CD4-positive, alpha-beta T cell (primary cell): ENCODE measurements at regions of chrX and their contacts with region 1.

Region 1: DNA sequence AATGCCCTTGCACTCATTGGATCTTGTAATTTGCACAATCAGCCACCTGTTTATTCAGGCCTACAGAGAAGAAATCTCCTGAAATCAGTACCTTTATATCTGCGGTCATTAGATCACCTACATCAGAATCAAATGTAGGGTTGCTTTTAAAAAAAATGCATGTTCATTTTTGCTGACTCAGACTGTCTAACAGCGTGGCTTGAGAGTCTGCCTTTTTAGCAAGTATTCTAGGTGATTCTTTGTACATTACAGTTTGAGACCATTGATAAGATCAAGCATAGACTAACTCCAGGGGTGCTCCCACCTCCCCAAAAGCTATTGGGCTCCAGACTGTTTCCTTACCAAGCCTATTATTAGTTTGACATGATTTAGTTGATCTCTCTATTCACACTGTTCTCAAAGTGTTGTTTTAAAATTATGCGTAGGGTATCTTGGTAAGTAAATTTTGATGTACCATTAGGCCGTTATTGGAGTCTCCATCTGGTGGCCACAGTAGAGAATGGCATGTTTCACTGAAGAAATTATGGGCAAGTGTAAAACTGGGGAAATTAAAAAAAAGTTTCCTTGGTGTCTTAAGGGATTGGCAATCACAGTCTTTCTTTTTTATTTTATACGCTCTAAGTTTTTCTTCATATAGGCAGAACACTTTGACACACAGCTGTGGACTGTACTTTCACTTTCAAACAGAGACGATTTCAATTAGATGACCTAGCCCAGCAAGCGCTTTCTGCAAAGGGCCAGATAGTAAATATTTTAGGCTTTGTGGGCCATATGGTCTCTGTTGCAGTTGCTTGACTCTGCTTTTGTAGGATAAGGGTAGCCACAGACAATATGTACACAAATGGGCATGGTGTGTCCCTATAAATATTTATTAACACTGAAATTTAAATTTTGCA is 33.7 kb upstream of the MSL3 start:
- DNase-seq: peak in 5 of 14 experiments; percentile 2 to 51 (median 28)
- ATAC-seq: peak; percentile 61
- H3K4me3 ChIP-seq: no peak overlapping the region
- H3K4me3 Mint-ChIP-seq: no peak overlapping the region
- H3K27ac ChIP-seq: no peak overlapping the region
- H3K27ac Mint-ChIP-seq: no peak overlapping the region
- H3K4me1 ChIP-seq: no peaks in the 10 kb centered on the region
- H3K4me1 Mint-ChIP-seq: no peaks in the 10 kb centered on the region
- H3K27me3 ChIP-seq: no peaks in the 10 kb centered on the region
- H3K27me3 Mint-ChIP-seq: no peaks in the 10 kb centered on the region
- CTCF ChIP-seq: peak; percentile 59

Region 2: GRCh38 chrX:10945498-10945897 is 778.9 kb before region 1 on chrX:
- CTCF ChIA-PET with region 1: no interaction called
- POLR2A ChIA-PET with region 1: no interaction called
- intact Hi-C with region 1: no loop called
- DNase-seq: no peak
- ATAC-seq: no peak
- H3K4me3 ChIP-seq: no peak overlapping the region
- H3K4me3 Mint-ChIP-seq: no peak overlapping the region
- H3K27ac ChIP-seq: no peak overlapping the region
- H3K27ac Mint-ChIP-seq: no peak overlapping the region
- H3K4me1 ChIP-seq: no peaks in the 10 kb centered on the region
- H3K4me1 Mint-ChIP-seq: no peaks in the 10 kb centered on the region
- H3K27me3 ChIP-seq: no peaks in the 10 kb centered on the region
- H3K27me3 Mint-ChIP-seq: no peaks in the 10 kb centered on the region
- CTCF ChIP-seq: no peak

Region 3: GRCh38 chrX:11655282-11656015 is 68.9 kb before region 1 on chrX:
- CTCF ChIA-PET with region 1: no interaction called
- POLR2A ChIA-PET with region 1: no interaction called
- intact Hi-C with region 1: no loop called
- DNase-seq: no peak
- ATAC-seq: no peak
- H3K4me3 ChIP-seq: no peak overlapping the region
- H3K4me3 Mint-ChIP-seq: no peak overlapping the region
- H3K27ac ChIP-seq: no peak overlapping the region
- H3K27ac Mint-ChIP-seq: no peak overlapping the region
- H3K4me1 ChIP-seq: no peaks in the 10 kb centered on the region
- H3K4me1 Mint-ChIP-seq: no peaks in the 10 kb centered on the region
- H3K27me3 ChIP-seq: no peaks in the 10 kb centered on the region
- H3K27me3 Mint-ChIP-seq: peaks cover 26% of the 10 kb centered on the region
- CTCF ChIP-seq: no peak

Region 4: DNA sequence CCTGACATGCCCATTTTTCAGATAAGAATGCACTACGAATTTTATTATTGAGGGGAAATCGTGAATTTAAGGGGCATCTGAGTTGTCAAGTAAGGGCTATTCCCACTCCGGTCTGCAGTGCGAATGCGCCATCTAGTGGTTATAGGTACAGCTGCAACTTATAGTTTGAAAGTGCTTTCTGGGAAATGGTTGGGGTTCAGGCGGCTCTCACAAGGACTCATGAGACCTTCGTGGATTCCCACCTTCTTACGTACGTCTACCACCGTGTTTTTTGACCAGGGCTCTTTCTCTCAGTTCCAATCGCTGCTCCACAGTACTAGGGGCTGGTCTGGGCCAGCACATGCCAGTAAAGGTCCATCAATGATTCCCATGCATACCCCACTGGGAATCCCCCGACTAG is 46.0 kb after region 1 on chrX:
- CTCF ChIA-PET with region 1: no interaction called
- POLR2A ChIA-PET with region 1: no interaction called
- intact Hi-C with region 1: loop called (anchors 5 to 10 kb)
- DNase-seq: peak in 11 of 14 experiments; percentile 27 to 83 (median 46)
- ATAC-seq: peak; percentile 60
- H3K4me3 ChIP-seq: no peak overlapping the region
- H3K4me3 Mint-ChIP-seq: no peak overlapping the region
- H3K27ac ChIP-seq: peak overlapping the region in 1 of 2 donors; percentile 16
- H3K27ac Mint-ChIP-seq: peak overlapping the region; percentile 79
- H3K4me1 ChIP-seq: peaks cover 26% of the 10 kb centered on the region
- H3K4me1 Mint-ChIP-seq: peaks cover 40% of the 10 kb centered on the region
- H3K27me3 ChIP-seq: no peaks in the 10 kb centered on the region
- H3K27me3 Mint-ChIP-seq: no peaks in the 10 kb centered on the region
- CTCF ChIP-seq: peak; percentile 70

Region 5: GRCh38 chrX:11813341-11813740 is 89.0 kb after region 1 on chrX:
- CTCF ChIA-PET with region 1: no interaction called
- POLR2A ChIA-PET with region 1: no interaction called
- intact Hi-C with region 1: no loop called
- DNase-seq: no peak
- ATAC-seq: no peak
- H3K4me3 ChIP-seq: no peak overlapping the region
- H3K4me3 Mint-ChIP-seq: no peak overlapping the region
- H3K27ac ChIP-seq: no peak overlapping the region
- H3K27ac Mint-ChIP-seq: no peak overlapping the region
- H3K4me1 ChIP-seq: no peaks in the 10 kb centered on the region
- H3K4me1 Mint-ChIP-seq: no peaks in the 10 kb centered on the region
- H3K27me3 ChIP-seq: no peaks in the 10 kb centered on the region
- H3K27me3 Mint-ChIP-seq: no peaks in the 10 kb centered on the region
- CTCF ChIP-seq: no peak